ENCODE measurements at regions of chr21 and their contacts with region 1.

Region 1: GRCh38 chr21:42248783-42249597 is 30.1 kb downstream of the ABCG1 start:
- DNase-seq: peak; percentile 76
- ATAC-seq: peak; percentile 99
- H3K4me3 ChIP-seq: peak overlapping the region; percentile 1; the same call in 1 of the 2 replicates
- H3K27ac ChIP-seq: peak overlapping the region; percentile 9; the same call in 1 of the 2 replicates
- H3K4me1 ChIP-seq: peaks cover 15% of the 10 kb centered on the region
- H3K27me3 ChIP-seq: no peaks in the 10 kb centered on the region
- CTCF ChIP-seq: no peak
- EP300 ChIP-seq: peak; percentile 44 to 86; a peak in 3 of 4 replicates
- POLR2A ChIP-seq: no peak
- RAD21 ChIP-seq: 0 out of 2 replicates have a peak, but pooled peaks have one; percentile 7

Region 2: DNA sequence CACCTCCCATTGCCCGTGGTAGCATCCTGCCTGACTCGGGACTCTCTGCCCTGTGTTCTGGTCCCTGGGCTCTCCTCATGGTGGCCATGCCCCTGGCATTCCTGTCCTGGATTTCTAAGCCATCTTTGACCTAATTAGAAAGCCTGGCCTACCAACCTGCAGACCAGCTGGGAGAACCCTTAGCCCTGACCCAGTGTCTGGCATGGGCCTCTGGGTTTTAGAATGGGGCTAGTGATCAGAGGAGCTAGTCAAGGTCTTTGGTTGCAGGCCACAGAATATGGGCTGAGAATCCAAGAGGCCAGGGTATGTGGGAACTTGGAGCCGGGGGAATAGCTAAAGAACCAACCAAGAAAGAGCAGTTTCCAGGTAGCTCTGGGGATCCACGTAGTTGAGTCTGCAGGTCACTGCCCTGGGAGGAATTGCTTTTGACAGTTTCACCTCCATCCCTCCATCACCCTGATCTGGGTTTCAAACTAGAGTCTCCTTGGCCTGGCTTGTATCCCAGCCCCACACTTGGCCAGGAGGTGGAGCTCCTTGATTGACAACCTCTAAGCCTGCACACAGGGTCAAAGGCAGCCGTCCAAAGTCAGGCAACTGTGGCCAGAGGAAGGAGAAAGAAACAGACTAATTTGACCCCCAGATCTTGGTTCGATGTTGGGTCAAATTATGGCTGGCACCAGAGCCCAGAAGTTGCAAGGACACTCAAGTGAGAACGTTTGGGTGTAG is 84.8 kb before region 1 on chr21:
- CTCF ChIA-PET with region 1: interaction called, 11 read pairs
- POLR2A ChIA-PET with region 1: no interaction called
- RAD21 ChIA-PET with region 1: interaction called, 7 read pairs
- SMC1A ChIA-PET with region 1: interaction called, 4 read pairs
- in situ Hi-C with region 1: no loop called
- intact Hi-C with region 1: no loop called
- DNase-seq: no peak
- ATAC-seq: peak; percentile 99
- H3K4me3 ChIP-seq: no peak overlapping the region
- H3K27ac ChIP-seq: no peak overlapping the region
- H3K4me1 ChIP-seq: no peaks in the 10 kb centered on the region
- H3K27me3 ChIP-seq: peaks cover 2 to 3% of the 10 kb centered on the region in 2 experiments; a peak in 3 of 4 replicates
- CTCF ChIP-seq: peak; percentile 73 to 90 (median 78)
- EP300 ChIP-seq: no peak
- POLR2A ChIP-seq: no peak
- RAD21 ChIP-seq: peak; percentile 99

Region 3: DNA sequence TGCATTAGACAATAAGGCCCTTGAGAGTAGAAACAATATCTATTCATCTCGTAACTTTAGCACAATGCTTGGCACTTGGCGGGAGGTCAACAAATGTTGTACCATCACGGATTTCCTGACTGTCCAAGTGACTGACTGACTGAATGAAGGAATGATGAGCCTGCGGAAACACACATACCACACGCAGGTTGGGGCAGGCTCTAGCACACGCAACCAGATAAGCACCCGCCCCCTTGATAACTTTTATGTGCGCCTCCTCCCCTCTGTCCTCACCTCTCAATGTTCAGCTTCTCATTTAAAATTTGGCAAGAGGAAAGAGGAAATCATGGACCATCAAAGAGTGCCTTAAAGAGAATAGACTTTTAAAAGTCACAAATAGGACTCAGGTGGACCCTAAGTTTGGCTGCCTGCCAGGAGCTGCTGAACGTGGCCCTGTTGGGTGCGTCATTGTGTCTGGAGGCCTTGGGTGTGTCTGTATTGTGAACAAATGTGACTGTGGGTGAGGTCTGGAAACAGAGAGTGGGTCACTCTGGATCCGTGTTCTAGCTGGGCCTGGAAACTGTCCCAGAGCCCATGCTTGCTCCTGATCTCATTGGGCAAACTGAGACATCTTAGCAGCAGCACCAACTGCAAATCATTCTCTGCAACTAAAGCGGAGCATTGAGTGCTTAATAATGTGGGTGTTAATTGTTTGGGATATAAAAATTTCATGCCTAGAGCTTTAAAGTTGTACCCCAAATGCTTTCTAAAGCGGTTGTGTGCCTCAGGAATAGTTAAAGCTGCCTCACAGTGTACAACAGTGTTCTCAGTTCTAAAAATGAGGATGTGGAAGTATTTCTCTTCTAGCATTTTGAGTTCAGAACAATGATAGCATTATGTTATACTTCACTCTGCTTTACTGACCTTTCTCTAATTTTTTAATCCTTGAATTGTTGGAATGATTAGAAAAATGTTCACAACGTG is 77.6 kb before region 1 on chr21:
- CTCF ChIA-PET with region 1: interaction called, 11 read pairs
- POLR2A ChIA-PET with region 1: interaction called, 3 read pairs
- RAD21 ChIA-PET with region 1: interaction called, 4 read pairs
- SMC1A ChIA-PET with region 1: interaction called, 10 read pairs
- in situ Hi-C with region 1: loop called (anchors 5 kb)
- intact Hi-C with region 1: no loop called
- DNase-seq: no peak
- ATAC-seq: 0 out of 3 replicates have a peak, but pooled peaks have one; percentile 31
- H3K4me3 ChIP-seq: no peak overlapping the region
- H3K27ac ChIP-seq: no peak overlapping the region
- H3K4me1 ChIP-seq: no peaks in the 10 kb centered on the region
- H3K27me3 ChIP-seq: 0 out of 4 replicates have a peak, but pooled peaks cover 0 to 2% of the 10 kb centered on the region in 2 experiments
- CTCF ChIP-seq: no peak
- EP300 ChIP-seq: no peak
- POLR2A ChIP-seq: no peak
- RAD21 ChIP-seq: no peak

Region 4: DNA sequence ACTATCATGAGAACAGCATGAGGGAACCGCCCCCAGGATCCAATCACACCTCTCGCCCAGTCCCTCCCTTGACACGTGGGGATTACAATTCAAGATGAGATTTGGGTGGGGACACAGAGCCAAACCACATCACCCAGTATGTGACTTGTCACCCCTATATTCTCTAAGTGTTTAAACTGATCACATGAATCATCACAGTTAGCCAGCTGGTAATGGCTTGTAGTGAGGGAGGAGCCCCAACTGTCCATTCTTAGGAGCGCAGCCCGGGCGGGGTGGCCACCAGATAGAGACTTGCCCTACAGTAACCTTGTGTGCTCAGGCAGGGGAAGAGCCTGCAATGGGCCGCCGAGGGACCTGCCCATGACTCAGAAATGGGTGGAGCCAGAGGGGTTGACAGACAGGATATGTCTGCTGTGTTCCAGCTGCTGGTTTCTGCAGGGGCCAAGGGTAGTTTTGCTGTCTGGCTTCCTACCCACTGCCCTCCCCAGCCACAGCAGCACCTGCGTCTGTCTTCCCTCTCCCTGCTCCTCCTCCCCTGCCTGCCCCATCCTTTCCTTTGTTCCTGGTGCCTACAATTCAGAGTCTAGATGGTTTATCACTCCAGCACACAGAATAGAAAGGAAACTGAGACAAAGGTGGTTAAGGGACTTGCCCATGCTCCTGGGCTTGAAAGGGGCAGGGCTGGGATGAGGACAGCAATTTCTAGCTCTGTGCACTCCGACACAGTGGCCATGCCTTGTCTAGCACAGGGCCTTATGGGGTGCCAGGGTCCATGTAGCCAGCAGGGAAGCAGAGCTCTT is 20.9 kb before region 1 on chr21:
- CTCF ChIA-PET with region 1: interaction called, 11 read pairs
- POLR2A ChIA-PET with region 1: interaction called, 11 read pairs
- RAD21 ChIA-PET with region 1: interaction called, 21 read pairs
- SMC1A ChIA-PET with region 1: interaction called, 25 read pairs
- in situ Hi-C with region 1: no loop called
- intact Hi-C with region 1: no loop called
- DNase-seq: peak; percentile 85
- ATAC-seq: peak; percentile 92
- H3K4me3 ChIP-seq: no peak overlapping the region
- H3K27ac ChIP-seq: peak overlapping the region; percentile 22
- H3K4me1 ChIP-seq: peaks cover 31% of the 10 kb centered on the region
- H3K27me3 ChIP-seq: no peaks in the 10 kb centered on the region
- CTCF ChIP-seq: no peak
- EP300 ChIP-seq: peak in 1 of 2 experiments; percentile 55; a peak in 1 of 4 replicates
- POLR2A ChIP-seq: no peak
- RAD21 ChIP-seq: no peak

Region 5: DNA sequence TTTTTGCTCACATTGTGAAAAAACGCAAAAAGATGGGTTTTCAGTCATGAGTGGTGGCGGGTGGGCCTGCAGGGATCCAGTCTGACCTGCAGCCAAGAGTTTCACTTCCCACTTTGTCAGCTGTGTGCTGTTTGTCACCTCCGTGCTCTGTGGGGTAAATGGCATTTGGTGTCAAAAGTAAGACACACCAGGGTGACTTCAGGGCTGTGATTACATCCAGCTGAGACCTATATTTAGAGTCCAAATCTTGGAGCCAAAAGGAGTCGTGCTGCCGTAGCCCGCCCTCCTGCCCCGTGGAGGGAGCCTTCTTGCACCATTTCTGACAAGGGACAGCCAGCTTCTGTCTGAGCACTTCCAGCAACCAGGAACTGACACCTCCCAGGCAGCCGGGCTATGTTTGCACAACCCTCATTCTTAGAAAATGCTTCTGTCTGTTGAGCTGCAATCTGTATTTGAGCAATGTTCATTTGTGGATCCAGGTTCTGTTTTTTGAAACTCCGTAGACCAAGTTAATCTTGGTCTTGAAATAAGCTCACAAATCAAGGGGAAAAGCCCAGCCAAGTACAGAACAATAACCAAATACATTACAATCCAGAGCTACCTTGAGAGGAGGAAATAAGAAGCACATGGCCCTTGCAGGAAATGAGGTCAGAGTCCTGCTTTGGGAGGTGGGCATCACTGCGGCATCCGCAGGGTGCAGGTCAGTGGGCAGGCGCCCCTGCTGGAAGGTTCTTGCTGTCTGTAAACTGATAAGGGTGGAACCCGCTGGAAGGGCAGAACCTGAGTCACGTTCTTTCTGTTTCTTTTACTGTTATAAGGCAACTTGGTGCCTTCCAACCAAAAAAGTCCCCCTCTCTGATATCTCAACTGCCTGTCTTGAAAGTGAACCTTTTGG is 15.7 kb before region 1 on chr21:
- CTCF ChIA-PET with region 1: interaction called, 22 read pairs
- POLR2A ChIA-PET with region 1: interaction called, 16 read pairs
- RAD21 ChIA-PET with region 1: interaction called, 60 read pairs
- SMC1A ChIA-PET with region 1: interaction called, 41 read pairs
- in situ Hi-C with region 1: no loop called
- intact Hi-C with region 1: no loop called
- DNase-seq: peak; percentile 82
- ATAC-seq: peak; percentile 71
- H3K4me3 ChIP-seq: no peak overlapping the region; the same call in 1 of the 2 replicates
- H3K27ac ChIP-seq: peak overlapping the region; percentile 84
- H3K4me1 ChIP-seq: peaks cover 69% of the 10 kb centered on the region
- H3K27me3 ChIP-seq: no peaks in the 10 kb centered on the region
- CTCF ChIP-seq: peak; percentile 37 to 47 (median 43); a peak in 4 of 6 replicates
- EP300 ChIP-seq: peak; percentile 91 to 98
- POLR2A ChIP-seq: no peak
- RAD21 ChIP-seq: 0 out of 2 replicates have a peak, but pooled peaks have one; percentile 7

Region 6: GRCh38 chr21:42238185-42238934 is 10.6 kb before region 1 on chr21:
- CTCF ChIA-PET with region 1: interaction called, 22 read pairs
- POLR2A ChIA-PET with region 1: interaction called, 16 read pairs
- RAD21 ChIA-PET with region 1: interaction called, 60 read pairs
- SMC1A ChIA-PET with region 1: interaction called, 41 read pairs
- in situ Hi-C with region 1: no loop called
- intact Hi-C with region 1: no loop called
- DNase-seq: peak; percentile 57
- ATAC-seq: peak; percentile 39
- H3K4me3 ChIP-seq: no peak overlapping the region
- H3K27ac ChIP-seq: peak overlapping the region; percentile 22
- H3K4me1 ChIP-seq: peaks cover 65% of the 10 kb centered on the region
- H3K27me3 ChIP-seq: no peaks in the 10 kb centered on the region
- CTCF ChIP-seq: no peak
- EP300 ChIP-seq: peak; percentile 25 to 39; a peak in 1 of 4 replicates
- POLR2A ChIP-seq: no peak
- RAD21 ChIP-seq: no peak

Measured in GM12878 (cell line).